CD14-positive monocyte (primary cell): ENCODE measurements at regions of chr3 and their contacts with region 1.

Region 1: DNA sequence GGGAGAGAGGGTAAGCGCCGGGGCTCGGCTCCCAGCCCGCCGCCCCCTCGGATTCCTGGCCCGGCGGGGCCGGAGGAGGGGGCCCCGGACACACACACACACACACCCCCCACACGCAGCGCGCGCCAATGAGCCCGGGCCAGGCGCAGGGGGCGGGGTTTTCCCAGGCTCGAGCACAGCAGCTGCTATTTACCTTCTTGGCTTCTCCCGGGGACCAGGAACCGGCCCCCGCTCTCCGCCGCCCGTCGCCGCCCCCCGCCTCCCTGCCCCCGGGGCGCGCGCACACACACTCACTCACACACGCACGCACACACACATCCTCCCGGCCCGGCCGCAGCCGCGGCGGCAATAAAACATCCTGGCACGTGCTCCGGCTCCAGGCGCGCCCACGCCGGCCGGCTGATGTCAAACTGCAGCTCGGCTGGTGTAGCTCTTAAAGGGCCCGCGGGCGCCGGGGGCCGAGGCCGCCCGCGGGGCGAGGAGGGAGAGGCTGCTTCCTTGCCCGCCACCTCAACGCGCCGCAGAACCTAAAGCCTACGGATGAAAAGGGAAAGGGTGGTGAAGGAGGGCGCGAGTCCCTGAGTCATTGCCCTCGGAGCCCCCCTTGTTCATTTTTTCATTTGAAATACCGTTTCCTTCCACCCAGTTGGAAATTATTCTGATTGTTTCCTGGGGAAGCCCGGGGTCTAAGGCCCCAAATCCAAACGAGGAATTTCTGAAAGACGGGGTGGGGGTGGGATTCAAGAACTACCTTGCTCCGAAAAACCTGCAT is 1.0 kb upstream of the HES1 start:
- DNase-seq: peak; percentile 83 to 91 (median 87)
- H3K4me3 ChIP-seq: peak overlapping the region; percentile 9 to 70 (median 41)
- H3K4me3 Mint-ChIP-seq: peak overlapping the region; percentile 82 to 90
- H3K27ac ChIP-seq: peak overlapping the region; percentile 11 to 48
- H3K27ac Mint-ChIP-seq: peak overlapping the region; percentile 57 to 91 (median 79)
- H3K4me1 ChIP-seq: peaks cover 39 to 47% of the 10 kb centered on the region in 2 donors
- H3K4me1 Mint-ChIP-seq: peaks cover 35% of the 10 kb centered on the region
- H3K27me3 ChIP-seq: peaks cover 78 to 90% of the 10 kb centered on the region in 2 donors
- H3K27me3 Mint-ChIP-seq: peaks cover 82 to 93% (median 86%) of the 10 kb centered on the region in 3 donors
- CTCF ChIP-seq: no peak

Region 2: DNA sequence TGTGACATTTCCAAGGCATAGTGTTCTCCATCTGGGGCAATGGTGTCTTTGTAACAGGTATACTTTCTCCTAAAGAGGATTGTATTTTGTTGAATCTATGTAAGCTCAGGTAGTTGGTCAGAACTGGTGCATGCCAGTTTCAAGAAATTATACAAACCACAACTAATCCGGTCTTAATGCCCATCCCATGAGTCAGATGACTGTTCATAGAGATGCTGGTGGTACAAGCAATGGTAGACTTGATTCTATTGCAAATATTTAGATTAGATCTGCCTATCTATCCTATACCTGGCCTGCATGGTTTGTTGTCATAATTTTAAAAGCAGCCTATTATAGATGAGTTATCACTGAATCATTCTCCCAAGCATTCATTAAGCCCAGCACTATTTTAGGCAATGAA is 799.9 kb before region 1 on chr3:
- intact Hi-C with region 1: no loop called
- DNase-seq: no peak
- H3K4me3 ChIP-seq: no peak overlapping the region
- H3K4me3 Mint-ChIP-seq: no peak overlapping the region
- H3K27ac ChIP-seq: no peak overlapping the region
- H3K27ac Mint-ChIP-seq: no peak overlapping the region
- H3K4me1 ChIP-seq: no peaks in the 10 kb centered on the region
- H3K4me1 Mint-ChIP-seq: no peaks in the 10 kb centered on the region
- H3K27me3 ChIP-seq: no peaks in the 10 kb centered on the region
- H3K27me3 Mint-ChIP-seq: peaks cover 0 to 4% (median 0%) of the 10 kb centered on the region in 3 donors
- CTCF ChIP-seq: no peak

Region 3: GRCh38 chr3:194003125-194004057 is 131.6 kb before region 1 on chr3:
- intact Hi-C with region 1: loop called in 1 of 2 experiments (anchors 2 kb)
- DNase-seq: peak; percentile 91 to 94 (median 93)
- H3K4me3 ChIP-seq: peak overlapping the region; percentile 32 to 75 (median 43)
- H3K4me3 Mint-ChIP-seq: peak overlapping the region; percentile 83 to 95
- H3K27ac ChIP-seq: peak overlapping the region; percentile 73 to 89
- H3K27ac Mint-ChIP-seq: peak overlapping the region; percentile 89 to 98 (median 96)
- H3K4me1 ChIP-seq: peaks cover 44 to 53% of the 10 kb centered on the region in 2 donors
- H3K4me1 Mint-ChIP-seq: peaks cover 59% of the 10 kb centered on the region
- H3K27me3 ChIP-seq: no peaks in the 10 kb centered on the region
- H3K27me3 Mint-ChIP-seq: peaks cover 4 to 11% (median 8%) of the 10 kb centered on the region in 3 donors
- CTCF ChIP-seq: no peak

Region 4: GRCh38 chr3:194046995-194047645 is 87.8 kb before region 1 on chr3:
- intact Hi-C with region 1: loop called in 1 of 2 experiments (anchors 5 kb)
- DNase-seq: peak; percentile 49 to 64 (median 63)
- H3K4me3 ChIP-seq: peak overlapping the region in 1 of 3 experiments; percentile 49
- H3K4me3 Mint-ChIP-seq: peak overlapping the region; percentile 4 to 67
- H3K27ac ChIP-seq: peak overlapping the region; percentile 78 to 86
- H3K27ac Mint-ChIP-seq: peak overlapping the region; percentile 86 to 94 (median 92)
- H3K4me1 ChIP-seq: peaks cover 37 to 38% of the 10 kb centered on the region in 2 donors
- H3K4me1 Mint-ChIP-seq: peaks cover 43% of the 10 kb centered on the region
- H3K27me3 ChIP-seq: no peaks in the 10 kb centered on the region
- H3K27me3 Mint-ChIP-seq: peaks cover 4 to 6% (median 6%) of the 10 kb centered on the region in 3 donors
- CTCF ChIP-seq: no peak

Region 5: DNA sequence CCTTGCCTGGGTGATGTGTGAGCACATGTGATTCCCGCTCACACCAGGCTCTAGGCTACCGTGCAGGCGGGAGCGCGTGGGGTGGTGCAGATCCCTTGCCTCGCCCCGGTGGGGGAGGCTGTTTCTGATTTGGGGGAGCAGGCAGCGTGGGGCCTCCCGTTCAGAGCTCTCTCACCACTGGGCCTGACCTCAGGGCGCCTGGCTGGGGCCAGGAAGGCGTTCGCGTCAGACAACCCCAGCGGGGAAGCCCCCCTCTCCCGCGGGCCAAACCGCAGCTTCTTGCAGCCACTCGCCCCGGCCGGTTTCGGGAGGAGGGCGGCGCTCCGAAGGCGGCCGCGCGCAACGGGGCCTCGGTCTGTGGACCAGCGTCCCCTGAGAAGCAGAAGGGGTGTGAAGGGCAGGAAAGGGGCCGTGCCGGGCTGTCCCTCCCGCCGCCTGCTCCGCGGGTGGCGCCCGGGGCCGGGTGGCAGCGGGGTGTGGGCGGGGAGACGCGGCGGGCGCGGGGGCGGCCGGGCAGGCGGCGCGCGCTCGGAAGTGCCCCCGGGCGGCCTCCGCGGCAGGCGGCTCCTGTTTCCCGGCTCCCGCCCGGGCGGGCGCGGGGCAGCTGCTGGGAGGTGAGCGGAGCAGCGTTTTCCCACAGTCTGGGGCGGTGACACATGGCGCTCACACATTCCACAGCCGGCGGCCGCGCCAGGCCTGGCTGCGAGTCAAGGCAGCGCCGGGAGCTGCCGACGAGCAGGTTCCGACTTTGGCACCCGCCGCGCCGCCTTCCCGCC is 64.1 kb before region 1 on chr3:
- intact Hi-C with region 1: loop called (anchors 5 kb)
- DNase-seq: peak; percentile 79 to 89 (median 87)
- H3K4me3 ChIP-seq: peak overlapping the region; percentile 5 to 73 (median 10)
- H3K4me3 Mint-ChIP-seq: peak overlapping the region; percentile 72 to 80
- H3K27ac ChIP-seq: no peak overlapping the region
- H3K27ac Mint-ChIP-seq: peak overlapping the region in 6 of 7 donors; percentile 40 to 90 (median 72)
- H3K4me1 ChIP-seq: peaks cover 26 to 33% of the 10 kb centered on the region in 2 donors
- H3K4me1 Mint-ChIP-seq: peaks cover 38% of the 10 kb centered on the region
- H3K27me3 ChIP-seq: peaks cover 16 to 22% of the 10 kb centered on the region in 2 donors
- H3K27me3 Mint-ChIP-seq: peaks cover 27 to 47% (median 28%) of the 10 kb centered on the region in 3 donors
- CTCF ChIP-seq: no peak